ENCODE measurements at regions of chr3 and their contacts with region 1.

Region 1: GRCh38 chr3:185824476-185825378 is at the start of gene IGF2BP2:
- DNase-seq: peak; percentile 73 to 96
- H3K4me3 ChIP-seq: peak within 1 kb of the TSS; percentile 99
- H3K27ac ChIP-seq: peak within 1 kb of the TSS; percentile 86
- H3K4me1 ChIP-seq: peaks cover 40% of the 10 kb centered on the region
- H3K27me3 ChIP-seq: no peaks in the 10 kb centered on the region
- CTCF ChIP-seq: no peak
- total RNA-seq, gene IGF2BP2: 140 and 150 TPM in 2 replicates

Region 2: GRCh38 chr3:185677146-185677829 is 147.4 kb before region 1 on chr3:
- CTCF ChIA-PET with region 1: no interaction called
- POLR2A ChIA-PET with region 1: interaction called, 8 read pairs
- intact Hi-C with region 1: loop called (anchors 2 kb)
- DNase-seq: peak; percentile 72 to 95
- H3K4me3 ChIP-seq: no peak overlapping the region
- H3K27ac ChIP-seq: peak overlapping the region; percentile 36
- H3K4me1 ChIP-seq: peaks cover 4% of the 10 kb centered on the region
- H3K27me3 ChIP-seq: no peaks in the 10 kb centered on the region
- CTCF ChIP-seq: peak; percentile 97

Region 3: DNA sequence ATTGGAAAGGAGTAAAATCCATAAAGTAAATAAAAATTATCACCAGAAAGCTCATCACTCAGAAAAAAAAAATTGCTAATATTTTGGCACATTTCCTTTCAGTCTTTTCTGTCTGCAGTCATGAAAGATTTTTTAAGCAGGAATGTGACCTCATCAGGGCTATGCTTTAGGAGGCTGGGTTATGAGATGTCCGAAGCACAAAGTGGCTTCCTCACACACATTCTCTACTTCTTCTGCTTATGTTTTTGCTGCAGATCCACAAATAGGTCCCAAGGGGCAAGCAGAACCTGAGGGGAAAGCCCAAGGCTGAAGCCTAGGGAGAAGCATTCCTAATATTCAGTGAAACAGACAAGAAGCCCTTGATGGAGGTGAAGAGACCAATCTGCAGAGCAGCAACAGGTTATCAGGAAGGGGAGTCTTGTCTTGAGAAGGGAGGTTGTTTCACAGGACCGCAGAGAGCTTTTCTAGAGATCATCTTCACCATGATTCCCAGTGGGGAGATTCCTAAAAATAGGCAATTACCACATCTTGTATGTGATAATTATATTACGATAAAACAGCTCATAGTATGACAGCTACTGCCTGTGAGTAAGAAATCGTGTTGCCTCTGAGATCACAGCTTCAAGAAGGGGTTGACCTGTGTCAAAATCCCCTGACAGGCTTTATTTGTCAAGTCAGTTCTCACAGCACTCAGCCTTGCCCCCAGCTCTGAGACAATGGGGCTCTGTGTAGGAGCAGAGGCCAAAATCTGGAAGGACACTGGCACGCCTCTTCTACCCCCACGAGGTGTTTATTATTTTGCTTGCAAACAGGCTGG is 60.4 kb before region 1 on chr3:
- CTCF ChIA-PET with region 1: interaction called, 12 read pairs
- POLR2A ChIA-PET with region 1: interaction called, 15 read pairs
- intact Hi-C with region 1: no loop called
- DNase-seq: no peak
- H3K4me3 ChIP-seq: no peak overlapping the region
- H3K27ac ChIP-seq: no peak overlapping the region
- H3K4me1 ChIP-seq: peaks cover 22% of the 10 kb centered on the region
- H3K27me3 ChIP-seq: no peaks in the 10 kb centered on the region
- CTCF ChIP-seq: no peak

Region 4: GRCh38 chr3:185807445-185808068 is 17.2 kb before region 1 on chr3:
- CTCF ChIA-PET with region 1: interaction called, 12 read pairs
- POLR2A ChIA-PET with region 1: interaction called, 6 read pairs
- intact Hi-C with region 1: no loop called
- DNase-seq: peak in 1 of 2 experiments; percentile 60
- H3K4me3 ChIP-seq: no peak overlapping the region
- H3K27ac ChIP-seq: no peak overlapping the region
- H3K4me1 ChIP-seq: no peaks in the 10 kb centered on the region; the same call in 1 of the 2 replicates
- H3K27me3 ChIP-seq: no peaks in the 10 kb centered on the region
- CTCF ChIP-seq: no peak

Region 5: GRCh38 chr3:185937689-185938463 is 113.1 kb after region 1 on chr3 and contains the start of gene TRA2B:
- CTCF ChIA-PET with region 1: interaction called, 3 read pairs
- POLR2A ChIA-PET with region 1: interaction called, 9 read pairs
- intact Hi-C with region 1: loop called (anchors 1 kb)
- DNase-seq: peak; percentile 93 to 99
- H3K4me3 ChIP-seq: peak within 1 kb of the TSS; percentile 98
- H3K27ac ChIP-seq: peak within 1 kb of the TSS; percentile 95
- H3K4me1 ChIP-seq: peaks cover 64% of the 10 kb centered on the region
- H3K27me3 ChIP-seq: no peaks in the 10 kb centered on the region
- CTCF ChIP-seq: peak; percentile 22; the same call in 1 of the 2 replicates
- total RNA-seq, gene TRA2B: 117 and 158 TPM in 2 replicates

Region 6: DNA sequence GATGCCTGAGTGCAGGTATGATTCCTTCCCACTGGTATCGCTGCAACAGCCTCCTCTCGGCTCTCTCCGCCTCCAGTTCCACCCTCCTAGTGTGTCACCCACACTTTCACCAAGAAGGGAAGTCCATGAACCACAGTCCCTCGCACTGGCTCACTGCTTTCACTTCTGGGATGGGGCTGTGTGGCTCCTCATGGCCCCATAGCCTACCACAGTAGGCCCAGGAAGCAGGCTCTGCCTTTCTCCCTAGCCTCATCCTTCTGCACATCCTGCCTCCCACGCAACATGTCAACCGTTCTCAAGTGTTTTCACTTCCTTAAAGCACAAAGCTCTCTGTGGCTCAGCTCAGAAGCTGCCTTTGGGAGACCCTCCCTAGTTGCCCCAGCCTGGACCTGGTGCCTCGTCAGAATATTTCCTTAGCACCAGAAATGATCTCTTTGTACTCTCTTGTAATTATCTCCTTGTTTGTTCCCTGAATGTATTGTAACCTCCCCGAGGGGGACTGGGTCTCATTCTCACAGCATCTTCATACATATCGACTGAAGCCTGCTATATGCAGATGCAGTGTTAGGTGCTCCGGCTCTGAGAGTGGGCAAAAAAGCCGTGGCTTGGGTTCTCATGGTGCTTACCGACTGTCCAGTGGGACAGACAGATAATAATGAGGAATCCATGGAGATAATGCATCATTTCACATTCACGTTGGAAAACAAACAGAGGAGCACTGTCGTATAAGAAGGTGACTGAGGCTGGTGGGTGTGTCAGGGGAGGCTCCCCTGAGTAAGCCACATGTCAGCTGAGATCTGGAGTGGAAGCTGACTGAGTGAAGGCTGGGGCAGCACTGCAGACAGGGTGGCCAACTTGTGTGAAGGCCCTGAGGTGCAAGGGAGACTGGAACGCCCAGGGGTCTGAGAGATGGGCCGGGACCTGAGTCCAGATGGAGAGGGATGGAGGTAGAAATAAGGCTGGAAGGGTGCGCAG is 430.2 kb after region 1 on chr3:
- CTCF ChIA-PET with region 1: no interaction called
- POLR2A ChIA-PET with region 1: no interaction called
- intact Hi-C with region 1: no loop called
- DNase-seq: no peak
- H3K4me3 ChIP-seq: no peak overlapping the region
- H3K27ac ChIP-seq: no peak overlapping the region
- H3K4me1 ChIP-seq: peaks cover 3% of the 10 kb centered on the region
- H3K27me3 ChIP-seq: peaks cover 34% of the 10 kb centered on the region
- CTCF ChIP-seq: no peak